Activated T-helper 1 cell treated with anti-CD3 and anti-CD28 coated beads, Interleukin-12 subunit alpha, Interleukin-12 subunit beta, Interleukin-2, Interleukin-4 antibody, amounts not matched to agents 30 ng/mL and 10 ng/mL and 1 ng/mL, durations not matched to agents 14 hours and 24 hours and 36 hours (primary cell): ENCODE measurements at regions of chr1 and their contacts with region 1.

Region 1: GRCh38 chr1:91548376-91549040 is 47.9 kb downstream of the CDC7 start:
- DNase-seq: no peak
- H3K4me3 Mint-ChIP-seq: peak overlapping the region; percentile 61
- H3K27ac Mint-ChIP-seq: peak overlapping the region; percentile 82
- H3K4me1 Mint-ChIP-seq: peaks cover 74% of the 10 kb centered on the region
- H3K27me3 Mint-ChIP-seq: no peaks in the 10 kb centered on the region

Region 2: DNA sequence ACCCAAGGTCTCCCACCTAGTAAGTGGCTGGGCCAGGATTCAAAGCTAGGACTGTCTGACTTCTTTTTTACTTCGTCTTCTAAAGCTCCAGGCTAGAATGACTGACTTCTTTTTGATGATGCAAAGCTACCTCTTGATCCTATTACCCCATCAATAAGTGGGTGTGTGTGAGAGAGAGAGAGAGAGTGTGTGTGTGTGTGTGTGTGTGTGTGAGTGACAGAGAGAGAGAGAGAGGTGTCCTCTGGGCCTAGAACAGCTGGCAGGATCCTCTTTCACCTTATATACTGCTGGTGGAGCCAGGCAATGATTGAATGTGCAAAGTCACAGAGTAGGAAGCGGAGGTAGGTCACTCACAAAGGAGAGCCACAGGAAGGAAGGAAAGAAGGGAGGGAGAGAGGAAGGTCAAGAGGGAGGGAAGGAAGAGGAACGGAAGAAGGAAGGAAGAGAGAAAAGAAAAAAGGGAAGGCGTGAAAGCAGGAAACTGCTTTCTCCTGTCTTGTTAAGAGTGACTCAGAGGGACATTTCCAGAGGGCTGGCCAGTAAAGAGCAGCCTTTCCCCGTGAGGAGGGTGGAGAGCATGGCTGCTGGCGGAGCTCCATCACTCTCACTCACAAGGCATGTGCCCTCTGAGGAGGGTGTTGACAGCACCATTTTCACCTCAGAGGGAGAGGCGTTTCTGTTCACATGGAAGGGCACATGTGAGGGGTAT is 21.1 kb after region 1 on chr1:
- intact Hi-C with region 1: loop called (anchors 2 kb)
- DNase-seq: no peak
- H3K4me3 Mint-ChIP-seq: no peak overlapping the region
- H3K27ac Mint-ChIP-seq: peak overlapping the region; percentile 36
- H3K4me1 Mint-ChIP-seq: peaks cover 32% of the 10 kb centered on the region
- H3K27me3 Mint-ChIP-seq: peaks cover 2% of the 10 kb centered on the region